ENCODE measurements at regions of chr2 and their contacts with region 1.

Region 1: GRCh38 chr2:64488050-64488974 is 34.4 kb downstream of the LGALSL start:
- DNase-seq: peak; percentile 86
- ATAC-seq: peak; percentile 95
- H3K4me3 Mint-ChIP-seq: no peak overlapping the region
- H3K27ac Mint-ChIP-seq: no peak overlapping the region
- H3K4me1 Mint-ChIP-seq: peaks cover 8% of the 10 kb centered on the region
- H3K27me3 Mint-ChIP-seq: peaks cover 1% of the 10 kb centered on the region
- CTCF ChIP-seq: peak; percentile 96

Region 2: GRCh38 chr2:64052468-64053241 is 435.7 kb before region 1 on chr2:
- CTCF ChIA-PET with region 1: interaction called, 15 read pairs
- POLR2A ChIA-PET with region 1: no interaction called
- intact Hi-C with region 1: loop called (anchors 5 kb)
- DNase-seq: no peak
- ATAC-seq: no peak
- H3K4me3 Mint-ChIP-seq: no peak overlapping the region
- H3K27ac Mint-ChIP-seq: no peak overlapping the region
- H3K4me1 Mint-ChIP-seq: peaks cover 40% of the 10 kb centered on the region
- H3K27me3 Mint-ChIP-seq: no peaks in the 10 kb centered on the region
- CTCF ChIP-seq: no peak

Region 3: GRCh38 chr2:64371727-64372126 is 116.6 kb before region 1 on chr2:
- CTCF ChIA-PET with region 1: interaction called, 10 read pairs
- POLR2A ChIA-PET with region 1: no interaction called
- intact Hi-C with region 1: no loop called
- DNase-seq: no peak
- ATAC-seq: no peak
- H3K4me3 Mint-ChIP-seq: no peak overlapping the region
- H3K27ac Mint-ChIP-seq: no peak overlapping the region
- H3K4me1 Mint-ChIP-seq: no peaks in the 10 kb centered on the region
- H3K27me3 Mint-ChIP-seq: no peaks in the 10 kb centered on the region
- CTCF ChIP-seq: no peak

Region 4: DNA sequence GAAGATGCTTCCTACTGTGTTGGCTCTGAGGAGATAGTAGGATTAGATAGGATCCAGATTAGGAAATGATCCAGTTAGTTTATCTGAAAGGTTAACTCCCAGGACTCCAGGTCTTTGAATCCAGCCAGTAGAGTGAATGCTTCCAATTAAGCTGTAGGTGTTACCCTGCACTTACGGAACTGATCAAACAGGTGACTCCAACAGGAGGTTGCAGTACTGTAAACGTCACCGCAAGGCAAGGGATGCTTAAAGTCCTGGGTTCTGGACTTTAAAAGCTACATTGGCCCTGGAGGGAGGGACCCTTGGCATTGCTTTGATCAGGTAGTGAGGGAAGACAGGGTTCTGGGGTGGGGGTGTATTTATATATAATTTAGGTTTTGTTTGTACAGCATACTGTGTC is 28.7 kb before region 1 on chr2:
- CTCF ChIA-PET with region 1: interaction called, 16 read pairs
- POLR2A ChIA-PET with region 1: no interaction called
- intact Hi-C with region 1: no loop called
- DNase-seq: no peak
- ATAC-seq: no peak
- H3K4me3 Mint-ChIP-seq: no peak overlapping the region
- H3K27ac Mint-ChIP-seq: no peak overlapping the region
- H3K4me1 Mint-ChIP-seq: peaks cover 5% of the 10 kb centered on the region
- H3K27me3 Mint-ChIP-seq: no peaks in the 10 kb centered on the region
- CTCF ChIP-seq: no peak

Region 5: DNA sequence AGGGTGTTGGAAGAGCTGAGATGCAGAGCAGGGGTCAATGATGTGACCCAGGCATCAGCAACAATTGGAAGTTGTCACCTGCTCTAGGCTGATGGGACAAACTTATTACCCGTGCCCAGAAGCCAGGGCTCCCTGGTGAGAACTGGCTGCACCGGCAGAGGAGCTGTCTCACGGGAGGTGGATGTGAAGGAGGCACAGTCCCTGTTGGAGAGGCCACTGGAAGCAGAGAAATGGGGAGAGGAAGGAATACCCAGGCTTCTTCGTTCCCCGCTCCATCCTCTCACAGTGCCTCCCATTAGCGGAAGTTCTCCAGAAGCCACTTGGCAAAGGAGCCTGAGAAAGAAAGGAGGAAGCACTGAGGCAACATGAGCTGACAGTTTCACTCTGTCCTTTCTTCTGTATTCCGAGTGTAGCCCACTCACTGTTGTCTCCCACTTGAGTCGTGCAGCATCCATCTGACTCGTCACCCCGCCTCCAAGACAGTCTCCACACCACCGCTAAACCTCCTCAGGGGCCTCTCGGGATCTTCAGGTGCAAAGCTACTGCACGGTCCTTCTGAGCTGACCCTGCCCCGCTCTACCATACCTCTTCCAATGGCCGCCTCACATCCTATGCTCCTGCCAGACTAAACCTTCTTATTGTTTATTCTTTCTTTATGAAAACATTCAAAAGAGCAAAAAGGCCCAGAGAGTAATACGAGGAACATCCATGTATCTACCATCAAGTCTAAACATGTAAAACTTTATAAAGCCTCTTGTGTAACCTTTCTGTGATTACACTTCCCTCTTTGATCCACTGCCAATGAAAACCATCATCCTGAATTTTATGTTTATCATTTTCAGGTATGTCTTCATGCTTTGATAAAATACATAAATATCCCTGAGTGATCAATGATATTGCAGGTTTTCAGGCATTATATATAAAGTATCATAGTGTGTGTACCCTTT is 16.7 kb after region 1 on chr2:
- CTCF ChIA-PET with region 1: interaction called, 73 read pairs
- POLR2A ChIA-PET with region 1: interaction called, 4 read pairs
- intact Hi-C with region 1: no loop called
- DNase-seq: no peak
- ATAC-seq: no peak
- H3K4me3 Mint-ChIP-seq: no peak overlapping the region
- H3K27ac Mint-ChIP-seq: no peak overlapping the region
- H3K4me1 Mint-ChIP-seq: no peaks in the 10 kb centered on the region
- H3K27me3 Mint-ChIP-seq: no peaks in the 10 kb centered on the region
- CTCF ChIP-seq: no peak

Region 6: GRCh38 chr2:64606479-64607363 is 118.4 kb after region 1 on chr2:
- CTCF ChIA-PET with region 1: no interaction called
- POLR2A ChIA-PET with region 1: no interaction called
- intact Hi-C with region 1: no loop called
- DNase-seq: peak; percentile 99
- ATAC-seq: peak; percentile 92
- H3K4me3 Mint-ChIP-seq: peak overlapping the region; percentile 60
- H3K27ac Mint-ChIP-seq: peak overlapping the region; percentile 93
- H3K4me1 Mint-ChIP-seq: peaks cover 22% of the 10 kb centered on the region
- H3K27me3 Mint-ChIP-seq: no peaks in the 10 kb centered on the region
- CTCF ChIP-seq: no peak